ENCODE measurements at regions of chr12 and their contacts with region 1.

Region 1: DNA sequence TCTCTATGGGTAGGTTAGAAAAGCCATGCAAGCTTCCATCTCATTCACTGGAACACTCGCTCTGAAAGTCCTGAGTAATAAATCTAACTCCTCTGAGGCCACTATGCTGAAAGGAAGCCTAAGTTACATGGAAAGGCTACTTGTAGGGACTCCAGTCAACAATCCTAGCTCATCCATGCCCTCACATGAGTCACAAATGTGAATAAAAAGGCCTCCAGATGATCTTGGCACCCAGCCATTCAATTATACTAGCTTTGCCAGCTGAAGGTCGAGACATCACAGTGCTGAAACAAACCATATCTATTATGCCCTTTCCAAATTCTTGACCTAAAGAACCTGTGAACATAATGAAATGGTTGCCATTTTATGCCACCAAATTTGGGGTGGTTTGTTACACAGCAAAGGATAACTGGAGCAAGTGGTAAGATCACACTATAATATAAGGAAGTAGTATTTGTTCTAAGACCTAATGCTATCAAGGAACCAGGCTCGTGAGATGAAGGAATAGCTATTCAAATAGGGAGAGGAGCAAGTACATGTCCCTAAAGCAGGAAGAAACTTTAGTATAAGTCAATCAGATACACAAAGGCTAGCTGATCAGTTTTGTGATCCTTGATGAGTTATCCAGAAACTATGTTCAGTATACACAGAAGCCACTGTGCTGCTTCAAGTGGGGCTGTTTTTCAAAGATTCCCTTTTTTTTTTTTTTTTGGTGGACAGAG is 142.1 kb downstream of the MED13L start:
- DNase-seq: peak; percentile 68
- H3K4me3 ChIP-seq: no peak overlapping the region
- H3K27ac ChIP-seq: peak overlapping the region; percentile 23
- H3K4me1 ChIP-seq: peaks cover 67% of the 10 kb centered on the region
- H3K27me3 ChIP-seq: no peaks in the 10 kb centered on the region
- CTCF ChIP-seq: no peak

Region 2: DNA sequence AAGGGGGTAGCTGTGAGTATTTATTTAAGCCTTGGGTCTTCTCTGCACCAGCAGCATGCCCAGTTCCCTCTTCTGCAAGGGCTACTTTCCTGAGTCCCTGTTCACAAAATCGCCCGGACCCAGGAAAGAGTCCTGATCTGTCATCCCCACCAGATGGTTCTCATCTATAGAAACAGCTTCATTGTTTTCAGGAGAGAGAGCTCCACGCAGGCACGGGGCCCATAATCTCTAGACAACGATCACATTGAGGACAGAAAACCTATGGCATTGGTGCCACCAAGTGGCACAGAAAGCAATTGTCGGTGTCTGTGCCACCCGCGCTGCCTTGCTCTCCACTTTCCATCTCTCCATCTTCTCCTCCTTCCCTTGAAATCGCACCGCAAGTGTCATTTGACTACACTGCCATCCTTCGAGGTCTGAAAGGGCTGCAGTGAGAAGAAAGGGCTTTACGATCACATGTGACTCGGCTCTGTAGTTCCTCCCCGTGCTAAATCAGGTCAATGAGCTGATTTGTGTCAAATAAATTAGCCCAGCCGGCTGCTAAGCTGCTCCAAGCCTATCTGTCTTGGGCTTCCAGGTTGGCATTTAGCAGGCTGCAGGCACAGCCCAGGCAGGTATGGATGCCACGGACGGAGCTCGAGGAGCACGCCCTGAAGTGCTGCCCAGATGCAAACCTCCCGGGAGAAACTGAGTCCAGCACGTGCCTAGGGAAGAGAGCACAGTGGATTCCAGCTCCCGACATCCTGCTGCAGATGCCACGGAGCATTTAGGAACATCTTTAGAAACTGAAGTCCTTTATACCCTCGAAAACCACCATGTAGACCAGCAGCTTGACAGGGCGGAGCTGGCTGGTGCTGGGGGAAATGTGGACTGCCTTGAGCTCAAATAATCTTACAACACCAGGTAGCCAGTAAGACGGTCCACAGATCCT is 573.7 kb after region 1 on chr12:
- CTCF ChIA-PET with region 1: interaction called, 5 read pairs
- POLR2A ChIA-PET with region 1: no interaction called
- intact Hi-C with region 1: loop called (anchors 5 kb)
- DNase-seq: peak; percentile 88
- H3K4me3 ChIP-seq: peak overlapping the region; percentile 16
- H3K27ac ChIP-seq: no peak overlapping the region
- H3K4me1 ChIP-seq: peaks cover 23% of the 10 kb centered on the region
- H3K27me3 ChIP-seq: no peaks in the 10 kb centered on the region
- CTCF ChIP-seq: peak; percentile 80